Dorsolateral prefrontal cortex (tissue), 120 donors: ENCODE measurements at regions of chr10 and their contacts with region 1.

Region 1: DNA sequence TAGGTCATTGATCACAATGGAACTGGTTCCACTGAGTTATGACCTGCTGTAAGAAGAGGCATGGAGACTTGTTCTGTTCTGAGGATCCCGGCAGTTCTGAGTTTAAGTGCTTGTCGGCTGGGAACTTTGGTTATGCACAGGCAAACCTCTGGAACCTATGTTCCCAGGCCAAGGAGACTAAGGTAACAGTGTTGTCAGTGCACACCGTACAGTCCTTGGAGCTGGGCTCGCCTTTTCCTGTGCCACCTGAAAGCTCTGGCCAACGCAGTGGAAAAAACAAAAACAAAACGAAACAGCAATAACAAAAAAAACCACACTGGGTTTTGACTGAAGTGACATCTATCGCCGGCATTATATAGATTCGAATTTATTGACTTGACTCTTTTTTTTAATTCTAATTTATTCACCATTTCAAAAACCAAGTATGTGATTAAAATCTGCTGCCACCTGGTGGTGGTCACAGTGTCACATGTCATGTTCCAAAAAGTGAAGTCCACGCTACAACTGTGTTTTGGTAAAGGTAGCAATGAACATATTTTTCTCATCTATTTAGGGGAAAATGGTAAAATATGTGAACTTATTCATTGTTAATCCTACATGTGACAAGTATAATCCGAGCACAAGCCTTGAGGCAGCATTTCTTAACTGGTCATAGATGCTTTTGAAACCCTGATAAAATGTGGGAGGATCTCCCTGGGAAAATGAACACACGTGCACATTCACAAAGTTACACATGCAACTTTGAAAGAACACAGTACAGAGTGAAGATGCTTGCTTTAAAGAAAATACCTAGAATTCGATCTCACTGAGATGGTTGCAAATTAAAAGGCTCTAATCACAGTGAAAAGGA is 113.8 kb upstream of the PPP2R2D start:
- DNase-seq: peak in 6 of 10 donors; percentile 49 to 83 (median 58)
- H3K4me3 ChIP-seq: no peak overlapping the region
- H3K27ac ChIP-seq: no peak overlapping the region
- H3K27me3 ChIP-seq: peaks cover 0 to 9% (median 0%) of the 10 kb centered on the region in 45 donors
- CTCF ChIP-seq: peak; percentile 78 to 95 (median 88)

Region 2: DNA sequence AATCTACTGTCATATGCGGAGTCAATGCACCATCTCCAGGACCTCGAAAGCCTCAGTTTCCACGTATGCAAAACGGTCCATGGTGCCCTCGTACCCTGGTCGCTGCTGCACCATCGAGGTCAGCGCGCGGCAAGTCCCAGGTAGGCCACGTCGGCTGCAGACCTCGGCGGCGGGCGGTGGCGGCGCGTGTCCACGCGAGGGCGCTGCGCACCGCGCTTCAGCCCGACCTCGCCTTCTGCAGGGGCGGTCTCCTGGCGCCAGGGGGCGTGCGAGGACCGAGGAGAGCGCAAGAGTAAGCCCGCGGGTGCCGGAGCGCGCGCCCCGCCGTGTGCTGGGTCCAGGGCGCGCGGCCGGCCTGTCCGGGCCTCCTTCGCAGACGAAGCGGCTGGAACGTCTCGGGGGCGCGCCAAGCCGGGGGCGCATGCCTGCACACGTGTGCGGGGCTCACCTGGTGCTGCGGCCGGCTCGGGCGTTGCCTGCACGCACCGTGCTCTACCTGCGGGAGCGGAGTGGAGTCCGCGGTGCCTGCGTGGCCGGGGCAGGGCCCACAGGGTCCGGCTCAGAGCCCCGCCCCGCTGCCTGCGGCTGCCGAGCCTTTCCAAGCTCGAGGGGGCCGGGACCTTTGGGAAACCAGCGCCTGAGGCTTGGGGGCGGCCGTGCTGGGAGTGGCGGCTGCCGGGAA is 1596.8 kb before region 1 on chr10:
- intact Hi-C with region 1: loop called (anchors 5 to 10 kb)
- DNase-seq: peak; percentile 71 to 89 (median 83)
- H3K4me3 ChIP-seq: peak overlapping the region; percentile 39 to 78 (median 68)
- H3K27ac ChIP-seq: peak overlapping the region in 26 of 59 donors; percentile 3 to 83 (median 63)
- H3K27me3 ChIP-seq: no peaks in the 10 kb centered on the region
- CTCF ChIP-seq: peak; percentile 92 to 100 (median 100)

Region 3: DNA sequence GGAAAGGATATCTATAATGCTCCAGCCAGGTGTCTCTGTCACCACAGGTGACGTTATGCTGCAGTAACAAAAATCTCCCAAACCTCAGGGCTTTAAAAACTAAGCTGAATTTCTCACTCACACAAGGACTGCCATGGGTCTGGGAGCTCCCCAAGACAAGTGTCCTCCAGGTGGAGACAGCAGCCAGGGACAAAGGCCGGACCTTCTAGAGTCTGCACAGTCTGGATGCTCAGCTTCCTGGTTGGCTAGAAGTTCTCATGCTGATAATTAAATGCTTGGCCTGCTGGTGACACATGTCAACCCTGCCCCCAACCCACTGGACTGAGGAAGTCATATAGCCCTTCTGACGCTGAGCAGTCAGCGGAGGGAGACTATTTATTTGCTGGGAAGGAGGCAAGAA is 427.2 kb before region 1 on chr10:
- intact Hi-C with region 1: loop called in 1 of 2 experiments (anchors 10 kb)
- DNase-seq: no peak
- H3K4me3 ChIP-seq: no peak overlapping the region
- H3K27ac ChIP-seq: no peak overlapping the region
- H3K27me3 ChIP-seq: peaks cover 0 to 41% (median 3%) of the 10 kb centered on the region in 45 donors
- CTCF ChIP-seq: peak in 16 of 56 donors; percentile 6 to 47 (median 20)

Region 4: GRCh38 chr10:131453594-131454355 is 333.2 kb before region 1 on chr10:
- intact Hi-C with region 1: loop called (anchors 5 kb)
- DNase-seq: peak; percentile 72 to 93 (median 82)
- H3K4me3 ChIP-seq: peak overlapping the region; percentile 13 to 66 (median 49)
- H3K27ac ChIP-seq: peak overlapping the region in 42 of 59 donors; percentile 4 to 84 (median 66)
- H3K27me3 ChIP-seq: peaks cover 0 to 12% (median 0%) of the 10 kb centered on the region in 45 donors
- CTCF ChIP-seq: peak; percentile 79 to 96 (median 90)

Region 5: DNA sequence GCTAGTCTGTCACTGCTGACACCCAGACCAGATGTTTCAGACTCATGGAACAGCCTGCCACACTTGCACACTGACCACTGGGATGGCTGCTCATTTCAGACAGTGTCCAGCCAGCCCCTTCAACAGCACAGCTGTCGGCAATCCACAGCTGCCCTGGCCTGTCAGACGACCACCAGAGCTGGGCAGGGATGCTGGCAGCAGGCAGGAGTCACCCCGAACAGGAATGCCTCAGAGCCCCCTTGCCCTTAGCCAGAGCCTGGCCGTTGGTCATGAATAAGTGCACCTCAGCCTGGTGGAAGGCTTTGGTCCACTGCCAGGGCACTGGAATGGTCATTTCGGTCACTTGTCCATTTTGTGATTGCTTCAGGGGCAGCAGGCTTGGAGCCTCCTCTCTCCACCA is 325.9 kb before region 1 on chr10:
- intact Hi-C with region 1: loop called in 1 of 2 experiments (anchors 5 kb)
- DNase-seq: no peak
- H3K4me3 ChIP-seq: no peak overlapping the region
- H3K27ac ChIP-seq: no peak overlapping the region
- H3K27me3 ChIP-seq: peaks cover 0 to 37% (median 3%) of the 10 kb centered on the region in 45 donors
- CTCF ChIP-seq: no peak